Pancreas (tissue), 10 donors: ENCODE measurements at regions of chr2 and their contacts with region 1.

Region 1: GRCh38 chr2:65382776-65383357 is 49.5 kb downstream of the SPRED2 start:
- DNase-seq: peak; percentile 77 to 86 (median 80)
- ATAC-seq: peak; percentile 84 to 91 (median 90)
- H3K4me3 ChIP-seq: no peak overlapping the region
- H3K27ac ChIP-seq: peak overlapping the region; percentile 64 to 76 (median 71)
- H3K4me1 ChIP-seq: peaks cover 24 to 40% (median 33%) of the 10 kb centered on the region in 3 donors
- H3K27me3 ChIP-seq: no peaks in the 10 kb centered on the region
- CTCF ChIP-seq: no peak

Region 2: GRCh38 chr2:65215946-65216345 is 166.9 kb before region 1 on chr2:
- intact Hi-C with region 1: no loop called
- DNase-seq: no peak
- ATAC-seq: no peak
- H3K4me3 ChIP-seq: no peak overlapping the region
- H3K27ac ChIP-seq: no peak overlapping the region
- H3K4me1 ChIP-seq: no peaks in the 10 kb centered on the region
- H3K27me3 ChIP-seq: no peaks in the 10 kb centered on the region
- CTCF ChIP-seq: no peak

Region 3: GRCh38 chr2:65432227-65433190 is 49.6 kb after region 1 on chr2 and contains the start of gene SPRED2:
- intact Hi-C with region 1: loop called in 1 of 3 experiments (anchors 10 kb)
- DNase-seq: peak; percentile 90 to 96 (median 94)
- ATAC-seq: peak; percentile 66 to 76 (median 71)
- H3K4me3 ChIP-seq: peak within 1 kb of the TSS; percentile 73 to 93 (median 89)
- H3K27ac ChIP-seq: peak within 1 kb of the TSS; percentile 90 to 95 (median 92)
- H3K4me1 ChIP-seq: peaks cover 14 to 20% (median 19%) of the 10 kb centered on the region in 3 donors
- H3K27me3 ChIP-seq: no peaks in the 10 kb centered on the region
- CTCF ChIP-seq: no peak
- total RNA-seq, gene SPRED2: 13.8 to 20.0 (median 16.3) TPM